ENCODE measurements at regions of chr9 and their contacts with region 1.

Region 1: GRCh38 chr9:127955294-127956035 is 17.8 kb upstream of the DPM2 start:
- DNase-seq: no peak
- ATAC-seq: peak; percentile 99
- H3K4me3 ChIP-seq: no peak overlapping the region
- H3K27ac ChIP-seq: no peak overlapping the region
- H3K4me1 ChIP-seq: peaks cover 14% of the 10 kb centered on the region
- H3K27me3 ChIP-seq: no peaks in the 10 kb centered on the region
- CTCF ChIP-seq: peak; percentile 59 to 69 (median 69)
- EP300 ChIP-seq: no peak
- POLR2A ChIP-seq: no peak
- RAD21 ChIP-seq: peak; percentile 70

Region 2: GRCh38 chr9:127899128-127899946 is 56.1 kb before region 1 on chr9 and contains the start of gene ST6GALNAC6:
- CTCF ChIA-PET with region 1: no interaction called
- POLR2A ChIA-PET with region 1: no interaction called
- RAD21 ChIA-PET with region 1: no interaction called
- SMC1A ChIA-PET with region 1: no interaction called
- in situ Hi-C with region 1: no loop called
- intact Hi-C with region 1: no loop called
- DNase-seq: no peak
- ATAC-seq: peak; percentile 76
- H3K4me3 ChIP-seq: peak within 1 kb of the TSS; percentile 91
- H3K27ac ChIP-seq: peak within 1 kb of the TSS; percentile 65; the same call in 1 of the 2 replicates
- H3K4me1 ChIP-seq: peaks cover 49% of the 10 kb centered on the region
- H3K27me3 ChIP-seq: no peaks in the 10 kb centered on the region
- CTCF ChIP-seq: no peak
- EP300 ChIP-seq: no peak
- POLR2A ChIP-seq: peak; percentile 55; the same call in 1 of the 2 replicates
- RAD21 ChIP-seq: peak; percentile 17; the same call in 1 of the 2 replicates
- polyA plus RNA-seq, gene ST6GALNAC6: 0.40 to 0.48 TPM

Region 3: GRCh38 chr9:127970401-127971313 is 15.2 kb after region 1 on chr9:
- CTCF ChIA-PET with region 1: interaction called, 34 read pairs
- POLR2A ChIA-PET with region 1: interaction called, 5 read pairs
- RAD21 ChIA-PET with region 1: interaction called, 4 read pairs
- SMC1A ChIA-PET with region 1: interaction called, 9 read pairs
- in situ Hi-C with region 1: no loop called
- intact Hi-C with region 1: no loop called
- DNase-seq: peak; percentile 95
- ATAC-seq: peak; percentile 92
- H3K4me3 ChIP-seq: peak overlapping the region; percentile 50; the same call in 1 of the 2 replicates
- H3K27ac ChIP-seq: peak overlapping the region; percentile 63
- H3K4me1 ChIP-seq: peaks cover 50% of the 10 kb centered on the region
- H3K27me3 ChIP-seq: no peaks in the 10 kb centered on the region
- CTCF ChIP-seq: no peak
- EP300 ChIP-seq: peak; percentile 72 to 90; a peak in 3 of 4 replicates
- POLR2A ChIP-seq: no peak; the same call in 1 of the 2 replicates
- RAD21 ChIP-seq: no peak

Region 4: DNA sequence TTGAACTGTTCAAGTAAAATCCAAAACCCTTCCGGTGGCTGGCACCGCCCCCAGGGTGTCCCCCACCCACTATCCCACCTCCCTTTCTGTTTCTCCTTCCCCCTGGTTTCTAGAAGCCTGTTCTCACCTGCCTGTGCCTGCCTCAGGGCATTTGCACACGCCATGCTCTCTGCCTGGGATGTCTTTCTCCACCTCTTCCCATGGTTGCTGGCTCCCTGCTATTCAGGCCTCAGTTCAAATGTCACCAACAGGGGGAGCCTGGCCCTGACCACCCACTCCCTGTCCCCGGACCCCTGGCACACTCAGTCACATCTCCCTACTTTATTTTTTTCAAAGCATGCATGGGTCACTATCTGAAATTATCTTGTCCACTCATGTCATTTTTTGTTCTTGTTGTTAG is 65.2 kb after region 1 on chr9:
- CTCF ChIA-PET with region 1: interaction called, 332 read pairs
- POLR2A ChIA-PET with region 1: interaction called, 4 read pairs
- RAD21 ChIA-PET with region 1: interaction called, 28 read pairs
- SMC1A ChIA-PET with region 1: interaction called, 10 read pairs
- in situ Hi-C with region 1: no loop called
- intact Hi-C with region 1: no loop called
- DNase-seq: no peak
- ATAC-seq: peak; percentile 31; the same call in 1 of the 3 replicates
- H3K4me3 ChIP-seq: no peak overlapping the region
- H3K27ac ChIP-seq: no peak overlapping the region
- H3K4me1 ChIP-seq: peaks cover 9% of the 10 kb centered on the region
- H3K27me3 ChIP-seq: no peaks in the 10 kb centered on the region; a peak in 1 of 4 replicates
- CTCF ChIP-seq: peak; percentile 20 to 37 (median 28); a peak in 2 of 6 replicates
- EP300 ChIP-seq: no peak
- POLR2A ChIP-seq: no peak
- RAD21 ChIP-seq: 0 out of 2 replicates have a peak, but pooled peaks have one; percentile 21

Region 5: GRCh38 chr9:128034821-128035764 is 79.6 kb after region 1 on chr9:
- CTCF ChIA-PET with region 1: interaction called, 332 read pairs
- POLR2A ChIA-PET with region 1: interaction called, 10 read pairs
- RAD21 ChIA-PET with region 1: interaction called, 80 read pairs
- SMC1A ChIA-PET with region 1: interaction called, 96 read pairs
- in situ Hi-C with region 1: loop called (anchors 10 kb)
- intact Hi-C with region 1: loop called (anchors 1 kb)
- DNase-seq: peak; percentile 60
- ATAC-seq: peak; percentile 82
- H3K4me3 ChIP-seq: no peak overlapping the region
- H3K27ac ChIP-seq: no peak overlapping the region
- H3K4me1 ChIP-seq: peaks cover 42% of the 10 kb centered on the region
- H3K27me3 ChIP-seq: no peaks in the 10 kb centered on the region
- CTCF ChIP-seq: peak; percentile 82 to 91 (median 91); a peak in 5 of 6 replicates
- EP300 ChIP-seq: no peak
- POLR2A ChIP-seq: no peak
- RAD21 ChIP-seq: peak; percentile 98

Region 6: DNA sequence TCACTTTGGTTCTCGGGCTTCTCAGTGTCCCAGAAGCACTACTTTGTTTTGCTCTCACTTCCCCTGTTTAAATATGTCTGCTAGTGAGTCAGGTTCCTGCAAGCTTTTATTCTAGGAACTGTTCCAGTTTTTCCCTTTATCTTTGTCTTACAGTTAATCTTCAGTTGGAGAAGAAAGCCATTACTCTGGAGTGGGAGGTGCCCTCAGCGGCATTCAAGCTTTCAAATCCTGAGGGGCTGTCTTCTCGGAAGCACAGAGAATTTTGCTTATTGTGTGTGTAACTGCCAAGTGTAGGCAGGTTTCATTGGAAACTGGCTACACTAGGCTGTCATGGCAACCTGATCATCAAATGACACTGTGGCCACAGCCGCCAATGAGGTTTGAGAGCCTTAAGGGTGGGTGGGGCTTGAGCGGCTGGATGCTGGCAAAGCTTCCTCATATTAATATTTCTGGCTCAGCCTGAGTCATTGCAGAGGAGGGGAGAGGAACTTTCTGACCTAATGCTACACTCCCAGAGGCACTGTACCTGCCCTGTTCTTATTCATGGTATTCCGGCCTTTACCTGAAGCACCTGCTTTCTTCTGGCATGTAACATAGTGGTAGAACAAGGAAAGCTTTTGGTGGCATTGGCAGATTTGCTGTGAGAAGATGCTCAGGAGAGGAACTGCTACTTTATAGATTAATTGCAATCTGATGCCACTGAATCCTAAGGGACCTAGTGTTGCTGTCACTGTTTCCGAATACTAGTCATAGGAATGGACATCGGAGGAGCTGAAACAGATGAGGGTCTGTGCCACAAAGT is 138.9 kb after region 1 on chr9:
- CTCF ChIA-PET with region 1: no interaction called
- POLR2A ChIA-PET with region 1: no interaction called
- RAD21 ChIA-PET with region 1: interaction called, 3 read pairs
- SMC1A ChIA-PET with region 1: interaction called, 10 read pairs
- in situ Hi-C with region 1: no loop called
- intact Hi-C with region 1: no loop called
- DNase-seq: no peak
- ATAC-seq: peak; percentile 99
- H3K4me3 ChIP-seq: no peak overlapping the region
- H3K27ac ChIP-seq: peak overlapping the region; percentile 51
- H3K4me1 ChIP-seq: peaks cover 25% of the 10 kb centered on the region
- H3K27me3 ChIP-seq: no peaks in the 10 kb centered on the region
- CTCF ChIP-seq: no peak
- EP300 ChIP-seq: no peak
- POLR2A ChIP-seq: no peak
- RAD21 ChIP-seq: no peak

Measured in GM12878 (cell line).